ENCODE measurements at regions of chr6 and their contacts with region 1.

Region 1: GRCh38 chr6:138869398-138869797 is 73.5 kb downstream of the ECT2L start:
- DNase-seq: peak; percentile 55 to 67
- ATAC-seq: peak; percentile 57 to 92 (median 84)
- H3K4me3 ChIP-seq: no peak overlapping the region
- H3K27ac ChIP-seq: peak overlapping the region; percentile 50 to 86 (median 77)
- H3K4me1 ChIP-seq: peaks cover 4 to 39% (median 16%) of the 10 kb centered on the region in 9 donors
- H3K27me3 ChIP-seq: no peaks in the 10 kb centered on the region
- CTCF ChIP-seq: no peak

Region 2: GRCh38 chr6:138785980-138786379 is 83.4 kb before region 1 on chr6:
- intact Hi-C with region 1: no loop called
- DNase-seq: peak in 1 of 2 donors; percentile 37
- ATAC-seq: peak; percentile 25 to 79 (median 64)
- H3K4me3 ChIP-seq: no peak overlapping the region
- H3K27ac ChIP-seq: peak overlapping the region in 9 of 10 donors; percentile 10 to 70 (median 44)
- H3K4me1 ChIP-seq: peaks cover 0 to 21% (median 15%) of the 10 kb centered on the region in 9 donors
- H3K27me3 ChIP-seq: no peaks in the 10 kb centered on the region
- CTCF ChIP-seq: no peak

Region 3: GRCh38 chr6:138833816-138834539 is 35.4 kb before region 1 on chr6:
- intact Hi-C with region 1: loop called in 2 of 10 experiments (anchors 5 kb)
- DNase-seq: peak; percentile 38 to 74
- ATAC-seq: peak; percentile 81 to 96 (median 93)
- H3K4me3 ChIP-seq: no peak overlapping the region
- H3K27ac ChIP-seq: peak overlapping the region in 9 of 10 donors; percentile 70 to 83 (median 79)
- H3K4me1 ChIP-seq: peaks cover 0 to 21% (median 6%) of the 10 kb centered on the region in 9 donors
- H3K27me3 ChIP-seq: no peaks in the 10 kb centered on the region
- CTCF ChIP-seq: no peak

Region 4: GRCh38 chr6:138844192-138844591 is 25.2 kb before region 1 on chr6:
- intact Hi-C with region 1: loop called in 1 of 10 experiments (anchors 2 kb)
- DNase-seq: peak; percentile 38 to 63
- ATAC-seq: peak; percentile 91 to 99 (median 93)
- H3K4me3 ChIP-seq: no peak overlapping the region
- H3K27ac ChIP-seq: peak overlapping the region in 9 of 10 donors; percentile 7 to 83 (median 75)
- H3K4me1 ChIP-seq: peaks cover 0 to 23% (median 8%) of the 10 kb centered on the region in 9 donors
- H3K27me3 ChIP-seq: no peaks in the 10 kb centered on the region
- CTCF ChIP-seq: no peak

Region 5: GRCh38 chr6:138999954-139000725 is 130.7 kb after region 1 on chr6:
- intact Hi-C with region 1: no loop called
- DNase-seq: no peak
- ATAC-seq: peak in 1 of 8 donors; percentile 47
- H3K4me3 ChIP-seq: no peak overlapping the region
- H3K27ac ChIP-seq: no peak overlapping the region
- H3K4me1 ChIP-seq: no peaks in the 10 kb centered on the region
- H3K27me3 ChIP-seq: no peaks in the 10 kb centered on the region
- CTCF ChIP-seq: no peak

Region 6: DNA sequence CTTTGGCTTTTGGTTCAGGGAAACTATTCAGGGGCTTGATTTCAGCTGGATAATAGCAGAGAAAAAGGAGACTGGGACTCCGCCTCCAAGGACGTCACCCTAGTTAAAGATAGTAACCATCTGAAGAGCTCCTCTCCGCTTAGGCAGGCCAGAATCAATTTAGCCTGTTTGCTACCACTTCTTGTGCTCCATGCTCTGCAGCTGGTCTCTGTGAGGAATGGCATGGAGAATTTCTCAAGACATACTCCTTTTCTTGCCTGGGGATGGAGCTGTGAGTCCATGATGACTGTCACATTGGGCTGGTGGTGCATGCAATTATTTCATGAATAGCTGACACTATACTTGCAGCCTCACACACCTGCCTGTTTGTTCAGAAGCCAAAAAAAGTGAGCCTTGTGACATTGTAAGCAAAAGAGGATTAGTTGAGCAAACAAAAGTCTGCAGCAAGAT is 361.0 kb after region 1 on chr6:
- intact Hi-C with region 1: no loop called
- DNase-seq: no peak
- ATAC-seq: peak in 6 of 8 donors; percentile 44 to 70 (median 60)
- H3K4me3 ChIP-seq: no peak overlapping the region
- H3K27ac ChIP-seq: peak overlapping the region in 1 of 10 donors; percentile 8
- H3K4me1 ChIP-seq: peaks cover 0 to 12% (median 3%) of the 10 kb centered on the region in 9 donors
- H3K27me3 ChIP-seq: no peaks in the 10 kb centered on the region
- CTCF ChIP-seq: peak in 3 of 9 donors; percentile 12 to 28 (median 20)

Measured in heart right ventricle (tissue), 16 donors.